ENCODE measurements at regions of chr19 and their contacts with region 1.

Region 1: DNA sequence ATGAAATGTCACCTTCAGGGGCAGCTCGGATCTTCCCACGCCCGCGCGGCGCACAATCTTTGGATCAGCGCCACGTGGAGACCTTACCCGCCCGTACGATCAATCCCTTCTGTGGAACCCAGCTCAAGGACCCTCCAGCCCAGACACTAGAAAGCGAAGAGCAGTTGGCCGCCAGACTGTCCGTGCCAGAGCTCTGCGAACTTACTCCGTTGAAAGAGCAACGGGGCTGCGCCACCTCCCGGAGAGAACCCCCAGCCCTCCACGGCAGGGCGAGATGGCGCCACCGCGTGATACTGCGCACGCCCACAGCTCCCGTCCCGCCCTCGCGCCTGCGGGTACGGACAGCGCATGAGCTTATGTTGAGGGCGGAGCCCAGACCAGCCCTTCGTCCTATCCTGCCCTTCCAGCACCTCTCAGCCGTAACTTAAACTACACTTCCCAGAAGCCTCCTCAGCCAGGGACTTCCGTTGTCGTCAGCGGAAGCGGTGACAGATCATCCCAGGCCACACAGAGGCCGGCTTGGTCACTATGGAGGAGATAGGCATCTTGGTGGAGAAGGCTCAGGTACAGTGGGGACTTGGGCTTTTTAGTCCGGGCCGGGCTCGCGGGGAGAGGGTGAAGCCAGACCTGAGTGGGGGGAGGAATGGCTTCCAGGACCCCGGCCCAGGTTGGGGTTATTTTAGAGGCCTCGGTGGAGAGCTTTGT is at the start of gene PSMC4:
- DNase-seq: peak; percentile 99
- total RNA-seq, gene PSMC4: 59.0 to 67.1 TPM

Region 2: DNA sequence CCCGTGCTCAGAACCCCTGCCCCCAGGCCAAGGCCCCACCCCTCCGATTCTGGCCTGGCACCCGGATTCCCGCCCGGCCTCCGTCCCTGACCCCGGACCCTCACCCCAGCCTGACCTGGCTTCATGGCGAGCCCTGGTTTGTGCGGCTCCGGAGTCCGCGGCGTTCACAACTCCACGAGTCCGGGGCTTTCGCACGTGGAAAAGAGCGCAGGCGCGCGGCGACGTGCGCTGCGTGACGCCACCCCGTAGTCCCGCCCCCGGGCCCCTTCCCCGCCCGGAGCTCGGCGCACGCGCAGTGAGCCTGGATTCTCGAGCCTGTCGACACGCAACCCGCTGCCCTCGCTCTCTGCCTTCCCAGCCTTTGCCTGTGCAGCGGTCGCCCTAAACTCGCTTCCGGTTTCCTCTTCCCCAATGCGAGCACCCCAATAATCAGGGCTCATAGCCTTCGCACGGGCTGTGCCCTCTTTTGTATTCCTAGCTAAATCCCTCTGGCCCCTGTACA is 124.6 kb before region 1 on chr19 and contains the start of gene FBL:
- intact Hi-C with region 1: loop called in 1 of 2 experiments (anchors 10 kb)
- DNase-seq: peak; percentile 99
- total RNA-seq, gene FBL: 94.1 to 121 TPM

Region 3: DNA sequence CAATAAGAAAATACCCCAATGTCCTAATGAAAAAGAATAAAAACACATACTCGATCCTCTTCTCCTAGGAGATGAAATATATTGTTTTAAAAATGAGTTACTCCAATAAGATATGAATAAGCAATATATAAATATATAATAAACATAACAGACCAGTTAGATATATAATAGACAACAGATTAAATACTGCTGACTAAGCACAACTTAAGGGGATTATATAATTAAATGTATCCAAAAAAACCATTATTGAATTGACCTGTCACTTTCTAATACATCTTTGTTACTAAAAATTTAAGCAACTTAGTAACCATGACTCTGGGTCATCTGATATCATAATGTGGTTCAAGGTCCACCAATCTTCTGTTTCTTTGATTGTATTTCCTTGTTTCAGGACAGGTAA is 99.2 kb after region 1 on chr19:
- intact Hi-C with region 1: no loop called
- DNase-seq: no peak

Region 4: DNA sequence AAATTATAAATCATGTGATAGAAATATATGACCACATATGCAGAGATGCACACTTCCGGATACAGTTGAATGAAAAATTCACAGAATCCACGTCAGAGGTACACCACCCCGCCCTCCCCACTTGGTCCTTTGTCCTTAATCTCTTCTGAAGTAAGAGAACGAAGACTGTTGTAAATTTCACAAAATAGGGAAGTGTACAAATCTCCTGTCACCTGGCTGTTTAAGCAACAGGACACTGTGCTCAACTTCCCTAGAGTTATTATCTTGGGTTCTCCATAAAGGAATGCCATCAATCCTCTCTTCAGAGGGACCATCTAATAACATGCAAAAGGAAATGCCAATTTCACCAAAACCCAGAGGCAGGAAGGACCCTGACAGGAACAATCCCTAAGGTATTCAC is 1774.0 kb after region 1 on chr19:
- intact Hi-C with region 1: loop called in 1 of 2 experiments (anchors 5 kb)
- DNase-seq: no peak